Activated CD4-positive, alpha-beta T cell treated with anti-CD3 and anti-CD28 coated beads for 36 hours (primary cell): ENCODE measurements at regions of chr1 and their contacts with region 1.

Region 1: DNA sequence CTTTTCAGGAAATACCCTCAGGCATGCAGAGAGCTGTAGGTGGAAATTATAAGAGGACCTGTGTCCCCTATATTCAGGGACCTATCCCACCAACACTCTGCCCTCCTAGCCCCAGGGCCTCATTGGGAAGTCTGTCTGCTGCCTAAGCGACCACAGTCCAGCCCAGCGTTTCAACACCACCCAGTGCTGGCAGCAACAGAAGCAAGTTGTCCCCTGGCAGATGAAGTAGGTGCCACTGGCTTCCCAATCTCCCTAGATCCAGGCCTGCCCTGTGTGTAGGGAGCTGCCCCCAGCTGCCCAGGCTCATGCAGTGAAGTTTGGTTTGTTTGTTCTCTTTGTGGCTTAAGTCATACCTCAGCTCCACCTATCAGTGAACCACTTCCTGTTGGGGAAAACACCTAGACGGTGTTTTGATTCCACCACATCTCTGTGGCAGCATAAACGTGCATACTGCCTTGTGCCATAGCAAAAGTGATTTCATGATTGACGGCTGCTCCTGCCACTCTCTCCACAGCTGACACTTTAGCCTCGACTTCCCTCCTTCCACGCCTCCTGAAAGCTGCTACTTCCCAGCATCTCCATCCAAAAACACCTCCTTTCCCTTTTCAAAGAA is 8.1 kb upstream of the LEFTY1 start:
- DNase-seq: peak; percentile 80
- ATAC-seq: peak; percentile 98
- H3K4me3 Mint-ChIP-seq: peak overlapping the region; percentile 59
- H3K27ac Mint-ChIP-seq: peak overlapping the region; percentile 95
- H3K4me1 Mint-ChIP-seq: peaks cover 42% of the 10 kb centered on the region
- H3K27me3 Mint-ChIP-seq: no peaks in the 10 kb centered on the region

Region 2: DNA sequence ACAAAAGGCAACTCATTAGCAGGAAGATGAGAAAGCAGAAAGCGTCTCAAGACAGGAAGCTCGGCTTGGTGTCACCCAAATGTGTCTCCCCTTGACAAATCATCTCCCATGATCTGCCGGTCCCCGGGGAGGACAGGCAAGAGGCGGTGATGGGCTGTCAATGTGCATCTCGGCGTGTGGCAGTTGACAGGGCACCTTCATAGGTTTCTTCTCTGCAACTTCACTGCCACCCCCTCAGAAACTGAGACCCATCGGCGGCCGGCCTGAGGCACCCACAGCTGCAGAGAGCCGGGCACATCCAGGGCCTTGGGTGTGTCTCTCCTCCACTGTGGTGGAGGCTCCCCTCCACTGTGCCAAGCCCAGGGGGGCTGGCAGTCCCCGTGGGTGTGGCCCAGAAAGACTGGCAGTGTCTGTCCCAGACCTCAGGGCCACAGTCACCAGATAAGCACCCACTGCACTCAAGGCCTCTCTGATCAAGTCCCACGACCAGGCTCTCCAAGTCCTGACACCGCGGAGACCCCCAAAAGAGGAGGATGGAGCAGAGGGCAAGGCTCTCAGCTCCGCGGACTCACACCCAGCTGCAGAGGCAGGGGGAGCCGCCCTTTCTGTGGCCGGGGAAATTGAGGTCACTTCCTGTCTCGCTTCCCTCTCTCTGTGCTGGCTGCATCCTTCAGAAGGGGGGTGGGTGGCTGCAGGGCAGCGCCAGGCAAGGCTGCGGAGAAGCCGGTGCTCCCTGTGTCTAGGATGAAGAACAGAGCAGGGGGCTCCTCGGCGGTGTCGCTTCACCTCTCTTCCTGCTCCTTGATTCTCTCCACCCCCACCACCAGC is 429.6 kb before region 1 on chr1:
- CTCF ChIA-PET with region 1: no interaction called
- POLR2A ChIA-PET with region 1: no interaction called
- intact Hi-C with region 1: loop called in 1 of 2 experiments (anchors 2 kb)
- DNase-seq: peak; percentile 90
- ATAC-seq: peak; percentile 90
- H3K4me3 Mint-ChIP-seq: peak overlapping the region; percentile 85
- H3K27ac Mint-ChIP-seq: peak overlapping the region; percentile 98
- H3K4me1 Mint-ChIP-seq: peaks cover 25% of the 10 kb centered on the region
- H3K27me3 Mint-ChIP-seq: no peaks in the 10 kb centered on the region

Region 3: GRCh38 chr1:225881969-225882693 is 14.9 kb before region 1 on chr1 and contains the start of gene TMEM63A:
- CTCF ChIA-PET with region 1: interaction called, 18 read pairs
- POLR2A ChIA-PET with region 1: interaction called, 3 read pairs
- intact Hi-C with region 1: loop called (anchors 1 kb)
- DNase-seq: peak; percentile 92
- ATAC-seq: peak; percentile 55
- H3K4me3 Mint-ChIP-seq: peak within 1 kb of the TSS; percentile 89
- H3K27ac Mint-ChIP-seq: peak within 1 kb of the TSS; percentile 91
- H3K4me1 Mint-ChIP-seq: peaks cover 50% of the 10 kb centered on the region
- H3K27me3 Mint-ChIP-seq: no peaks in the 10 kb centered on the region
- total RNA-seq, gene TMEM63A: 47.3 to 48.0 TPM

Region 4: GRCh38 chr1:225923692-225924555 is 26.9 kb after region 1 on chr1 and contains the start of gene PYCR2:
- CTCF ChIA-PET with region 1: interaction called, 3 read pairs
- POLR2A ChIA-PET with region 1: interaction called, 9 read pairs
- intact Hi-C with region 1: loop called (anchors 1 kb)
- DNase-seq: peak; percentile 97
- ATAC-seq: peak; percentile 97
- H3K4me3 Mint-ChIP-seq: peak within 1 kb of the TSS; percentile 93
- H3K27ac Mint-ChIP-seq: peak within 1 kb of the TSS; percentile 96
- H3K4me1 Mint-ChIP-seq: peaks cover 54% of the 10 kb centered on the region
- H3K27me3 Mint-ChIP-seq: no peaks in the 10 kb centered on the region
- total RNA-seq, gene PYCR2: 106 to 126 TPM

Region 5: DNA sequence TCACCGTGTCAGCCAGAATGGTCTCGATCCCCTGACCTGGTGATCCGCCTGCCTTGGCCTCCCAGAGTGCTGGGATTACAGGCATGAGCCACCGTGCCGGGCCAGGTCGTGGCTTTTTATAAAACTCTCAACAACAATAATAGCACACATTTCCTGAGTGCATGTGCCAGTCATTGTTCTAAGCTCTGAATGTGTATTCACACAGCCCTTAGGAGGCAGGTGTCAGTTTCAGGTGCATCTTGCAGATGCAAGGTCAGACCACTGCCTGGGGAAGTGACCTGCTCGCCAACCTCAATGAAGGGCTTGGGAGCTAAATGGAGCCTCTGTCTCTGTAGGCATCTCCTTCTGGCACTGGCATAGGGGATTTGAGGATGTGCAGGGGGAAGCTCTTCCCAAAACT is 45.5 kb after region 1 on chr1:
- CTCF ChIA-PET with region 1: no interaction called
- POLR2A ChIA-PET with region 1: no interaction called
- intact Hi-C with region 1: no loop called
- DNase-seq: no peak
- ATAC-seq: no peak
- H3K4me3 Mint-ChIP-seq: no peak overlapping the region
- H3K27ac Mint-ChIP-seq: no peak overlapping the region
- H3K4me1 Mint-ChIP-seq: peaks cover 9% of the 10 kb centered on the region
- H3K27me3 Mint-ChIP-seq: peaks cover 3% of the 10 kb centered on the region